ENCODE measurements at regions of chr1 and their contacts with region 1.

Region 1: GRCh38 chr1:1399187-1399871 is at the start of gene CCNL2:
- DNase-seq: peak; percentile 94
- ATAC-seq: peak; percentile 89
- H3K4me3 ChIP-seq: peak within 1 kb of the TSS; percentile 96 to 99
- H3K27ac ChIP-seq: peak within 1 kb of the TSS; percentile 86
- H3K4me1 ChIP-seq: peaks cover 8 to 46% of the 10 kb centered on the region in 2 experiments; a peak in 3 of 4 replicates
- H3K27me3 ChIP-seq: no peaks in the 10 kb centered on the region
- CTCF ChIP-seq: peak in 2 of 3 experiments; percentile 51 to 64; a peak in 4 of 6 replicates
- POLR2A ChIP-seq: peak; percentile 64
- RAD21 ChIP-seq: no peak
- total RNA-seq, gene CCNL2: 173 TPM

Region 2: GRCh38 chr1:1441002-1441888 is 41.9 kb after region 1 on chr1:
- CTCF ChIA-PET with region 1: interaction called, 4 read pairs
- POLR2A ChIA-PET with region 1: no interaction called
- RAD21 ChIA-PET with region 1: no interaction called
- intact Hi-C with region 1: loop called (anchors 2 kb)
- DNase-seq: no peak
- ATAC-seq: peak; percentile 85
- H3K4me3 ChIP-seq: 0 out of 4 replicates have a peak overlapping the region, but pooled peaks of 1 of the 2 experiments have one; percentile 13
- H3K27ac ChIP-seq: peak overlapping the region; percentile 52; the same call in 1 of the 2 replicates
- H3K4me1 ChIP-seq: peaks cover 14 to 25% of the 10 kb centered on the region in 2 experiments
- H3K27me3 ChIP-seq: no peaks in the 10 kb centered on the region
- CTCF ChIP-seq: peak in 2 of 3 experiments; percentile 90 to 93; a peak in 4 of 6 replicates
- POLR2A ChIP-seq: no peak
- RAD21 ChIP-seq: no peak